Sigmoid colon (tissue), 7 donors: ENCODE measurements at regions of chr1 and their contacts with region 1.

Region 1: DNA sequence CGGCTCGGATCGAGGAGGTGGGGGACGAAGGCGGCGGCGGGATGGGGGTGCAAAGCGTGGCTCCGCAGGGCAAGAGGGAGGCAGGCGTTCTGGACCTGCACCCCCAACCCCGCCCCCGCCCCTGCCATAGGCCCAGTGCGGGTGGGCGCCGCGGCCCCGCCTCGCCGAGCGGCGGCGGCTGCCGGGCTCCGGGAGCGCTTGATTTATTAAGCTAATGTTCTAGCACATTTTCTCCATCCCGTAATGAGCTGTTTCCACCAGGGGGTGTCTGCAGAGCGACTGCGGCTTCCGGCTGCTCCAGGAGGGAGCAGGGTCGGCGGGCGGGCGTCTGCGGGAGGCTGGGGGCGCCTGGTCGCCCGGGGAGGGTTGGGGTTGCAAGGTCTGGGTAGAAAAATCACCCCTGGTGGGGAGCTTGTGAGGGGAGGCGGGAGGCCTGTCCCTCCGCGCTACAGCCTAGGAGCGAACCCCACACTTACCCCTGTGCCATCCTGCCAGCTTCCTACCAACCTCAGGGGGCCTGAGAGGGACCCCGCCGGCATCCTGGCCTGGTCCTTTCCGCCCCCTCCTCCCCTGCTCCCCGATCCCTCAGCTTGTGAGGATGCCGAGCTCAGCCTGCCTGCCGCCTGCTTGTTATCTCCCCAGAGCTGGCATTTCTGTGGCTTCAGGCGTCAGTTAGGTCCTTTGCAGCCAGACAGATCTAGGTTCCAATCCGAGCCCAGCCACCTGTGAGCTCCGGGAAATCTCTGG is 48.5 kb upstream of the ACOT11 start:
- DNase-seq: no peak
- H3K4me3 ChIP-seq: peak overlapping the region; percentile 16 to 51 (median 46)
- H3K27ac ChIP-seq: peak overlapping the region in 3 of 4 donors; percentile 7 to 55 (median 55)
- H3K4me1 ChIP-seq: peaks cover 0 to 17% (median 15%) of the 10 kb centered on the region in 4 donors
- H3K27me3 ChIP-seq: no peaks in the 10 kb centered on the region
- CTCF ChIP-seq: peak; percentile 27 to 62 (median 36)
- EP300 ChIP-seq: no peak
- POLR2A ChIP-seq: no peak

Region 2: GRCh38 chr1:53620061-53620855 is 879.3 kb before region 1 on chr1:
- intact Hi-C with region 1: no loop called
- DNase-seq: peak; percentile 58
- H3K4me3 ChIP-seq: no peak overlapping the region
- H3K27ac ChIP-seq: no peak overlapping the region
- H3K4me1 ChIP-seq: no peaks in the 10 kb centered on the region
- H3K27me3 ChIP-seq: no peaks in the 10 kb centered on the region
- CTCF ChIP-seq: no peak
- EP300 ChIP-seq: no peak
- POLR2A ChIP-seq: no peak

Region 3: GRCh38 chr1:54464482-54465146 is 34.9 kb before region 1 on chr1:
- intact Hi-C with region 1: no loop called
- DNase-seq: peak; percentile 53
- H3K4me3 ChIP-seq: no peak overlapping the region
- H3K27ac ChIP-seq: peak overlapping the region in 3 of 4 donors; percentile 34 to 51 (median 42)
- H3K4me1 ChIP-seq: peaks cover 0 to 29% (median 21%) of the 10 kb centered on the region in 4 donors
- H3K27me3 ChIP-seq: no peaks in the 10 kb centered on the region
- CTCF ChIP-seq: no peak
- EP300 ChIP-seq: no peak
- POLR2A ChIP-seq: no peak

Region 4: DNA sequence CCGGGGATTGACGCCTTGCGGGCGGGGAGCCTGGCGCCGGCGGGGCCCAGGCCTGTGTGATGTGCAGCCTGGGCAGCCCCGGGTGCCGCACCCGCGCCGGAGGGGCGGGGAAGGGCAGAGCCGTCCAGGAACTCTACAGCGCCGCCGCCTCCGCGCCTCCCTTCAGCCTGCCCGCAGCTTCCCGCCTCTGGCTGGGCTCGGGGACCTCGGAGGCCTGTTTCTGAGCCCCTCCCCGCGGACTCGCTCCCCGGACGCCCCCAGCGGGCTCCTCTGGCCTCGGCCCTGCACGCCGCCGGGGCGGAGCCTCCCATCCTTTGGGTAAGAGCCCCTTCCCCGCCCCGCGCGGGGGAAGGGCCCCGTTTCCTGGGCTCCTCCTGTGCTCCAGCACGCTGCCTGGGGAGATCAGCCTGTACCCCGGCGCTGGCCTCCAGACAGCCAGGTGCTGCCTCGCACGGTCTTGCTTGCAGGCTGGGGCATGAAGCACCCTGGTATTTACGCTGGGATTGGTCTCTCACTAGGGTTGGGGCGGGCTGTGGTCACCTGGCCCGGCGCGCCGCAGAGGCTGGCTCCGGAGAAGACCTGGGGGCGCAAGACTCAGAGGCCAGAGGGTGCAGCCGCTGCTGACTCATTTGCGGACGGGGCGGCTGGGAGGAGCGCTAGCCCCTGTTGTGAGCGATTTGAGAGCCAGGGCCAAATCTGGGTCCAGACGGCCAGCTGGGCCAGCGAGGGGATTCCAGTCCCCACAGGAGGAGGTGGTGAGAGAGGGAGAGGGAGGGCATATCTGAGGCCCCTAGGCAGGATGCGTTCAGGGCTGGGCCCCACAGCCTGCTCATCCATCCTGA is 42.8 kb after region 1 on chr1:
- intact Hi-C with region 1: loop called (anchors 1 kb)
- DNase-seq: peak; percentile 78
- H3K4me3 ChIP-seq: peak overlapping the region; percentile 36 to 62 (median 52)
- H3K27ac ChIP-seq: peak overlapping the region; percentile 85 to 91 (median 86)
- H3K4me1 ChIP-seq: peaks cover 0 to 39% (median 38%) of the 10 kb centered on the region in 4 donors
- H3K27me3 ChIP-seq: no peaks in the 10 kb centered on the region
- CTCF ChIP-seq: peak in 1 of 4 experiments; percentile 21
- EP300 ChIP-seq: no peak
- POLR2A ChIP-seq: no peak

Region 5: GRCh38 chr1:54547601-54548388 is 48.3 kb after region 1 on chr1 and contains the start of gene ACOT11:
- intact Hi-C with region 1: loop called (anchors 2 kb)
- DNase-seq: peak; percentile 98
- H3K4me3 ChIP-seq: peak within 1 kb of the TSS; percentile 17 to 51 (median 46)
- H3K27ac ChIP-seq: peak within 1 kb of the TSS; percentile 83 to 90 (median 88)
- H3K4me1 ChIP-seq: peaks cover 0 to 53% (median 51%) of the 10 kb centered on the region in 4 donors
- H3K27me3 ChIP-seq: no peaks in the 10 kb centered on the region
- CTCF ChIP-seq: peak; percentile 66 to 93 (median 78)
- EP300 ChIP-seq: peak; percentile 30 to 83 (median 60)
- POLR2A ChIP-seq: peak in 1 of 2 donors; percentile 50
- total RNA-seq, gene ACOT11: 8.9 to 30.5 (median 19.8) TPM

Region 6: DNA sequence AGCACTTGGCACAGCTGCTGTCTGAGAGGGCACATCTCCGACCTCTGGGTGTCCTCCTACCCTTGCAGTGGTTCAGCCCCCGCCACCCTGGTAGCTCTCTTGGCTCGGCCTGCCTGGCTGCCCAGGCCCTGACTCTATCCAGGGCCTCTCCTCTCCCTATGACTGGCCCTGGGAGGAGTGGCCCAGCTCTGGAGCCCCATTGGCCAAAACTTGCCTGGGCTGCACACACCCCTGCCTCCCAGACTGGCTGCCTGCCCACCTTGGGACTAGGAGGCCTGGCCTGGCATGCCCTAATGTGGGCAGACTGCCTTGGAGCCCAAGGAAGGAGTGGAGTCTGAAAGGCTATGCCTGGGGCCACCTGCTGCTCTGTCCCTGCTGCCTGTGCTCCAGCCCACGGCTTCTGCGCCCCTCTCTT is 82.1 kb after region 1 on chr1:
- intact Hi-C with region 1: loop called (anchors 2 kb)
- DNase-seq: peak; percentile 98
- H3K4me3 ChIP-seq: no peak overlapping the region
- H3K27ac ChIP-seq: peak overlapping the region; percentile 85 to 91 (median 89)
- H3K4me1 ChIP-seq: peaks cover 0 to 56% (median 50%) of the 10 kb centered on the region in 4 donors
- H3K27me3 ChIP-seq: no peaks in the 10 kb centered on the region
- CTCF ChIP-seq: peak in 1 of 4 experiments; percentile 14
- EP300 ChIP-seq: peak in 3 of 4 donors; percentile 31 to 84 (median 75)
- POLR2A ChIP-seq: peak; percentile 39 to 73

Region 7: DNA sequence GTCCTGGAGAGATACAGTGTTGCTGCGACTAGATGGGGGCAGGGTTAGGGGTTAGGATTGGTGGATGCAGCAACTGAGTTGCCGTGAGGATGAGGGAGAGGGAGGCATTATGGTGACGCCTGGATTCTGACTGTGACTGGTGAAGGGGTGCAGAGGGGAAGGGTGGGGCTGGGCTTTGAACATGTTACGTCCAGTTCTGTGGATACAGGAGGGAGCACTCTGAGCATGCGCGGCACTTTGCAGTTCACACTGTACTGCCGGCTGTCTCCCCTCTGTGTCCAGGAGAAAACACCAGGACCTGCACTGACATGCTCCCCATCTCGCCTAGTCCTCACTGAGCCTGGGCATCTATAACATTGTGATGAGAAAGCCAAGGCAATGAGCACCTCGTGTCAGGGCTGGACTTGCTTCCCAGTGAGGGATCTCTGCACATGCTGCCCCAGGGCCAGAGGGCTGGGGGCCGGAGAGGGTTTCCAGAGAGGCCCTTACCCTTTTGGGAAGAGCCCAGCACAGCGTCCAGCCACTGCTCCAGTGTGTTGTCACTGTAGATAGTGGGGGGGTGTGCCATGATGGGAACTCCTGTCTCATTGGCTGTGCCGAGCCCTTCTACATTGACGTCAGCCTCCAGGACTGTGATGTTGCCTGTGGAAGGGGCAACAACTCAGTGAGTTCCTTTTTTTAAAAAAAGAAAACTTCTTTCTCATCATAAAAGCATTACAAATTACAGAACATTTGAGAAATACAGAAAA is 116.2 kb after region 1 on chr1:
- intact Hi-C with region 1: no loop called
- DNase-seq: peak; percentile 57
- H3K4me3 ChIP-seq: no peak overlapping the region
- H3K27ac ChIP-seq: no peak overlapping the region
- H3K4me1 ChIP-seq: no peaks in the 10 kb centered on the region
- H3K27me3 ChIP-seq: no peaks in the 10 kb centered on the region
- CTCF ChIP-seq: no peak
- EP300 ChIP-seq: no peak
- POLR2A ChIP-seq: no peak

Region 8: GRCh38 chr1:54715493-54716298 is 216.2 kb after region 1 on chr1 and contains the start of gene TTC4:
- intact Hi-C with region 1: loop called (anchors 10 kb)
- DNase-seq: peak; percentile 90
- H3K4me3 ChIP-seq: peak within 1 kb of the TSS; percentile 73 to 84 (median 77)
- H3K27ac ChIP-seq: peak within 1 kb of the TSS; percentile 75 to 86 (median 80)
- H3K4me1 ChIP-seq: peaks cover 0 to 18% (median 15%) of the 10 kb centered on the region in 4 donors
- H3K27me3 ChIP-seq: no peaks in the 10 kb centered on the region
- CTCF ChIP-seq: no peak
- EP300 ChIP-seq: no peak
- POLR2A ChIP-seq: peak; percentile 31 to 32
- total RNA-seq, gene TTC4: 12.6 to 33.4 (median 27.2) TPM

Region 9: DNA sequence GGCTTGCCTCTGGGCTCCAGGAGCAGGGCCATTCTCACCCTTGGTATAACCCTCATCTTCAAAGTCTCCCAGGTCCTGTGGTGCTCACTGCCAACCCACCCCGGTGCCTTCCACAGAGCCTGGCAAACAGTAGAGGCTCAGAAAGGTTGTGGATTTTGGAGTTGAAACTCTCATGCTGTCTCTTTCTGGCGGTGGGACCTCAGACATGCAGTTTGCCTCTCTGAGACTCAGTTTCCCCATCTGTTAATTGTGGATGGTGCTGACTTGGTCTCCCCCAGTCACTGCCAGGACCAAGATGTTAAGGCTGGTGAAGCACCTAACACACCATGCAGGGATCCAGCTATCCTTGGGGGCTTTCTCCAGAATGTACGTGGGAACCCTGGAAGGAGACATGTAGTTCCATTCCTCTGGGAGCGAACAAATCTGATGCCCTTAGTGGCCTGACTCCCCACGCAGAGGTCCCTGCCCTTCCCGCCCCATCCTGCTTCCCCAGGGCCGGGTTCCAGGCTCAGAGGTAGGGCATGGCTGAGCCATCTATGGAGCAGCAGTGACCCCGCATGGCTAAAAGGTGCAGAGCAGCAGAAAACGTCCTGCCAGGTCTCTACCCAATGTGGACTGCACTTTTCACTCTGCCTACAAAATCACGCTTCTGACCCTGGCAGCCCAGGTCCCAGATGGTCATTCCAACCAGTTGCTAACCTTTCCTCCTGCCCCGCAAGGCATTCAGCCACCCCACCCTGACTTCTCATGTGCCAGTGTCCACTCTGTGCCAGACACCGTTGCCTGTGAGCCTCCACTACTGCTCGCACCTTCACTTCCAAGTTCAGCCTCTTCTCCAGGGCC is 310.8 kb after region 1 on chr1:
- intact Hi-C with region 1: loop called (anchors 2 kb)
- DNase-seq: no peak
- H3K4me3 ChIP-seq: no peak overlapping the region
- H3K27ac ChIP-seq: no peak overlapping the region
- H3K4me1 ChIP-seq: peaks cover 0 to 5% (median 4%) of the 10 kb centered on the region in 4 donors
- H3K27me3 ChIP-seq: peaks cover 0 to 4% (median 0%) of the 10 kb centered on the region in 3 donors
- CTCF ChIP-seq: peak; percentile 62 to 84 (median 78)
- EP300 ChIP-seq: no peak
- POLR2A ChIP-seq: no peak

Region 10: DNA sequence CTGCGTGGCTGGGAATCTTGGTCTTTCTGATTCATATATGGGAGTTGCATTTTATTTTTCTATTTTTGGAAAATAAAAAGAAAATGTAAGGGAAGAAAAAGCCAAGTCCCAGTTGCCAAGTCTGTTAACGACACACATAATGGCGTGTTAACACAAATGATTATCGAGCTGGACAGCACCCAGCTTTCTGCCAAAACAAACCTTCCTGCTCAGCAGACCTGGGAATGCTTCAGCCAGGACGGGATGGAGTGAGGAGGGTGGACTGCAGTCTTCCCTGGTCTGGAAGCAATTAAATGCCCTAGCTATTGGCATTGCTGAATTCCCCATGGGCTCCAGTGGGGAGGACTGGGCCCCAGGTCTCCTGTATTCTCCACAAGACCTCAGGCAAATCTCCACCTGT is 899.8 kb after region 1 on chr1:
- intact Hi-C with region 1: no loop called
- DNase-seq: no peak
- H3K4me3 ChIP-seq: no peak overlapping the region
- H3K27ac ChIP-seq: no peak overlapping the region
- H3K4me1 ChIP-seq: no peaks in the 10 kb centered on the region
- H3K27me3 ChIP-seq: no peaks in the 10 kb centered on the region
- CTCF ChIP-seq: no peak
- EP300 ChIP-seq: no peak
- POLR2A ChIP-seq: no peak